ENCODE measurements at regions of chr3 and their contacts with region 1.

Region 1: GRCh38 chr3:108477511-108478147 is 32.8 kb downstream of the MYH15 start:
- DNase-seq: peak; percentile 49
- H3K4me3 ChIP-seq: no peak overlapping the region
- H3K27ac ChIP-seq: no peak overlapping the region
- H3K27me3 ChIP-seq: no peaks in the 10 kb centered on the region
- CTCF ChIP-seq: peak; percentile 81

Region 2: GRCh38 chr3:107660306-107660976 is 817.2 kb before region 1 on chr3:
- CTCF ChIA-PET with region 1: interaction called, 12 read pairs
- POLR2A ChIA-PET with region 1: no interaction called
- DNase-seq: no peak
- H3K4me3 ChIP-seq: no peak overlapping the region
- H3K27ac ChIP-seq: no peak overlapping the region
- H3K27me3 ChIP-seq: no peaks in the 10 kb centered on the region
- CTCF ChIP-seq: peak; percentile 66

Region 3: DNA sequence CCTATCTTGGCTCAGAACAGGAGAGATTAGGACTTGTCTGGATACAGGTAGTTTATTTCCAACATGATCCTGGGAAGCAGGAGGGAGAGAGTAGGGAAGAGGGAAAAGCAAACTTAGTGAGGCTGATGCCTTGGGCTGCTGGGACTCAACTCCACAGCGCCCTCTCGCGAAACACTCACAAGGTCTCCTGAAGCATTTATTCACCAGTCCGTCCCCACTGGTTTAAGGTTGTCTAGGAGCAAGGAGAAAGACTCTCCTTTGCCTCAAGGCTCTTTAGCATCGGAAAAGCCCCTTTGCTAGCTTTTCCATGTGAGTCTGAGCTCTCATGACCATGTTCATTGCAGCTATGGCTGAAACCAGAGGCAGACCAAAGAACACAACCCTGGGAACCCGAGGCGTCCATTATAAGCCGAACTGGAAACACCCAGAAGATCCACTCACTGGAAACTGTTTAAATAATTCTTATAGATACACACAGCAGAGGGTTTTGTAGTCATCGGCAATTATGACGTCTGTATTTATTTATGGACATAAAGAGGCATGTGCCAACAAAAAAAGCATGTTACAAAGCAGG is 631.3 kb before region 1 on chr3:
- CTCF ChIA-PET with region 1: interaction called, 13 read pairs
- POLR2A ChIA-PET with region 1: no interaction called
- DNase-seq: peak; percentile 21
- H3K4me3 ChIP-seq: no peak overlapping the region
- H3K27ac ChIP-seq: no peak overlapping the region
- H3K27me3 ChIP-seq: peaks cover 6% of the 10 kb centered on the region
- CTCF ChIP-seq: peak; percentile 72

Region 4: DNA sequence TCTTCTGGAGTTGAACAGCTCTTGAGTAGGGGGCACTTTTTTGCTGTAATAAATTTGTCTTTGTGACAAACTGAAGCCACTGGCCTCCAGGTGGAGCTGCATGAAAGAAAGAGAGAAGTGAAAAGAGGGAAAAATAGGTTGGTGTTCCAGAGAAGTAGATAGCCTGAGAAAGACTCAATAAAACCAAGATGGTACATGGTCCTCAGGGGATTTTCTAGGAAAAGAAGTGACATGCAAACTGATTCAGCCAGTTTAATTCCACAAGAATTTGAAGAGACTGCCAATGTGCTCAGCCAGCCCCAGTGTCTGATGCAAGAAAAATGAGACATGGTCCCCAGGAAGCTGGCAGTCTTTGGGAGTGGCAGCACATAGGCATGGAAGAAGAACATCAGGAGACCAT is 539.5 kb before region 1 on chr3:
- CTCF ChIA-PET with region 1: interaction called, 21 read pairs
- POLR2A ChIA-PET with region 1: no interaction called
- DNase-seq: no peak
- H3K4me3 ChIP-seq: no peak overlapping the region
- H3K27ac ChIP-seq: no peak overlapping the region
- H3K27me3 ChIP-seq: peaks cover 3% of the 10 kb centered on the region
- CTCF ChIP-seq: peak; percentile 57

Region 5: GRCh38 chr3:108406661-108407206 is 70.9 kb before region 1 on chr3:
- CTCF ChIA-PET with region 1: interaction called, 11 read pairs
- POLR2A ChIA-PET with region 1: no interaction called
- DNase-seq: peak; percentile 16
- H3K4me3 ChIP-seq: no peak overlapping the region
- H3K27ac ChIP-seq: no peak overlapping the region
- H3K27me3 ChIP-seq: no peaks in the 10 kb centered on the region
- CTCF ChIP-seq: peak; percentile 80

Region 6: DNA sequence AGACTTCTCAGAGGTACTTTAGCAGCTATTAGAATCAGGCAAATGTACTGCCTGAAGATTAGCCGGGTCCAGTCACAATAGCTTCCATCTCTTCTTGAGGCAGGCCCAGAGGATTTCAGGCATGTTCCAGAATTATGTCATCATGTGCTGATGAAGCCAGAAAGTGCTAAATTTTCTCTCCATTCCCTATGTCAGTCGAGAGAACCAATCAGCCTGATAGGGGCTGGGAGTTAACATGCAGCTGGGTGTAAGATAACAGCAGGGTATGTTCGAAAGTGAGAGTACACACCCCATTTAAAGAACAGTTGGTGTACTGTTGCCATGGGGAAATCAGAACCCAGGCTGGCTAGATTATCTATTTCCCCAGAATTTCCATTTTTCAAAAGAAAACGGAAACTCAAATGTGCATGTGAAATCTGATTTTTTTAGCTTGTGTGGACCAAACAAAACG is 15.9 kb before region 1 on chr3:
- CTCF ChIA-PET with region 1: interaction called, 27 read pairs
- POLR2A ChIA-PET with region 1: no interaction called
- DNase-seq: no peak
- H3K4me3 ChIP-seq: no peak overlapping the region
- H3K27ac ChIP-seq: no peak overlapping the region
- H3K27me3 ChIP-seq: no peaks in the 10 kb centered on the region
- CTCF ChIP-seq: no peak

Region 7: DNA sequence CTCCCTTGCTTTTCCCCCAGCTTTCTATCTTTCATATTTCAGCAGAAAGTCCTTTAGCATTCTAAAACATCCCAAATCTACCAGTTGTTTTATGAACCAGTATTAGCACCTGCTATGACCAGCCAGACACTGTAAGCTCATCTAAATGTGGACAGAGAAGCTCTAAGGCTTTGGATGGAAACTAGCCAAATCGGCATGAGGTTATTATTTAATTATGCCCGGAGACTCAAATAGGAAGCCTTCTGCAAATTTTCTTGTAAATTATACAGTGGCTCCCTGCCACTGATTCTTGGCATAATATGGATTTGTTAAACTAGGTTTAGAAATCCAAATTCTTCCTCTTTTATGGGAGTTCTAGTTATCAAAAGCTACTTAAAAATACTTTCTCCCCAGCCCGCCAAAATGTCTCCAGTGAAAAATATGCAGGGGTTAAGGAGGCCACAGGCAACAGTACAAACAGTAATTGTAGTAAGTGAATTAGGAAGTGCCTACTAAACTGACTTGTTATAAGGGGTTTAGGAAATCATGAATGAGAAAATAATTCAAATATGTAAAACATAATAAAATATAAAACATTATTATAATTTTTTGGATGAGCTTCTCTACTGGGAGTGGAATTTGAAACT is 17.4 kb after region 1 on chr3:
- CTCF ChIA-PET with region 1: interaction called, 22 read pairs
- POLR2A ChIA-PET with region 1: no interaction called
- DNase-seq: no peak
- H3K4me3 ChIP-seq: no peak overlapping the region
- H3K27ac ChIP-seq: no peak overlapping the region
- H3K27me3 ChIP-seq: no peaks in the 10 kb centered on the region
- CTCF ChIP-seq: no peak